ENCODE measurements at regions of chr7 and their contacts with region 1.

Region 1: DNA sequence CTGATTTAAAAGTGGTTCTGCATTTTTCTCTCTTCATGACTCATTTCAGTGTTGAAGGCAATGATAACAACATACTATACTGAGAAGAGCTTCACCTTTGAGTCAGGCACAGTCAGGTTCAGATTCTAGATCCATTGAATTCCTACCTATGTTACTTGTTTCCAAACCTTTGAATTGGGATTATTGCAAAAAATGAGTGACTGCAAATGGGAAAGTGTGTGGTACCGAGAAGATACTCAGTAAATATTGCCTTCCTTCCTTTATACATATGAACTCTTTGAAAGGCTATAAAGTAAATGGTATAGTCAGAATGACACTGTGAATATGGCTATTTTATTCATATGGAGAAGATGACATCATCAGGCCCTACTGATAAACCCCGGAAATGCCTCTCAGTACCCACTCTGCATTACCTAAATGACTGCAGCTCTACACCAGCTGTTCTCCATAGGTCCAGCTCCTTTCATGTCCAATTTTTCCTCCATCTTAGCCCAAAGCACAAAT is 66.7 kb upstream of the FGL2 start:
- DNase-seq: no peak
- H3K4me3 Mint-ChIP-seq: no peak overlapping the region
- H3K27ac Mint-ChIP-seq: peak overlapping the region; percentile 62
- H3K4me1 Mint-ChIP-seq: peaks cover 21% of the 10 kb centered on the region
- H3K27me3 Mint-ChIP-seq: no peaks in the 10 kb centered on the region

Region 2: GRCh38 chr7:77157446-77157845 is 108.9 kb before region 1 on chr7:
- intact Hi-C with region 1: no loop called
- DNase-seq: peak; percentile 2
- H3K4me3 Mint-ChIP-seq: peak overlapping the region; percentile 50
- H3K27ac Mint-ChIP-seq: peak overlapping the region; percentile 94
- H3K4me1 Mint-ChIP-seq: peaks cover 34% of the 10 kb centered on the region
- H3K27me3 Mint-ChIP-seq: no peaks in the 10 kb centered on the region

Region 3: GRCh38 chr7:77188731-77189437 is 77.5 kb before region 1 on chr7:
- intact Hi-C with region 1: loop called (anchors 2 kb)
- DNase-seq: no peak
- H3K4me3 Mint-ChIP-seq: no peak overlapping the region
- H3K27ac Mint-ChIP-seq: no peak overlapping the region
- H3K4me1 Mint-ChIP-seq: peaks cover 17% of the 10 kb centered on the region
- H3K27me3 Mint-ChIP-seq: peaks cover 2% of the 10 kb centered on the region

Region 4: DNA sequence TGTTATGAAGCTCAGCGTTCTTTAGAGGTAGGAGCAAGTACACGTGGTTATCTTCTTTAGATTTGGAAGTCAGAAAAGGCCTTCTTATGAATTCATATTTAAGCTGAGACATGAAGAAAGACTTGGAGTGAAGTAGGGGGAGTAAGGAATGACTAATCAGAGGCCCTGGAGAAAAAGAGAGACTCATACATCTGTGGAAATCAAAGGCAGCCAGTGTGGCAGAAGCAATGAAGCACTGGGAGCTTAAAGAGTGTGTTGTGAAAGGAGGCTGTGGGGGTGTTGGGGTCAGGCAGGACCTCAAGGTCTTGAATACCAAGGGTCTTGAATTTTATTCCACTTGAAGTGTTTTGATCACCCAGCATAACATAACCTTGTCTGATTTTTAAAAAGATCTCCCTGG is 31.1 kb before region 1 on chr7:
- intact Hi-C with region 1: no loop called
- DNase-seq: no peak
- H3K4me3 Mint-ChIP-seq: no peak overlapping the region
- H3K27ac Mint-ChIP-seq: no peak overlapping the region
- H3K4me1 Mint-ChIP-seq: peaks cover 16% of the 10 kb centered on the region
- H3K27me3 Mint-ChIP-seq: peaks cover 2% of the 10 kb centered on the region

Region 5: DNA sequence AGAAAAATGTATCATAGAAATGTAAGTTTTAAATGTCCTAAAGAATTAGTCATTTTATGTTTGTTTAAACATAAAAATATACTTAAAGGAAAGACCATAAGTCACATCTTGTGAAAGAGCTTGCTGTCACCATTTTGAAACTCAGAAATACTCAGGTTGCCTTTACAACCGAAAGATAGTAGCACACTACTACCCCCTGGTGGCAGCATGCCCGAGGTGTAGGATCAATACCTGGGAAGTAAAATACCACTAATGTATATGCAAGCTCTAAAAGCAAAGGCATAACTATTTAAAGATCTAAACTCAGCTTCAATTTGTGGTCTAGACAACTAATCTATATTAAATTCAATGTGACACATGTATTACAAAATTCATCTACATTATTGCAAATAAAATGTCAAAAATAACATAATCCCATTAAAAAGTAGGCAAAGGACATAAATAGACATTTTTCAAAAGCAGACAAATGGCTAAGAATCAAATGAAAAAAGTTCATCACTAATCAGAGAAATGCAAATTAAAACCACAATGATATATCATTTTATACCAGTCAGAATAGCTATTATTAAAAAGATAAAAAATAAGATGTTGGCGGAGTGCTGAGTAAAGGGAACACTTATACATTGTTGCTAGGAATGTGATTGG is 19.0 kb before region 1 on chr7:
- intact Hi-C with region 1: loop called (anchors 1 kb)
- DNase-seq: peak; percentile 79
- H3K4me3 Mint-ChIP-seq: no peak overlapping the region
- H3K27ac Mint-ChIP-seq: no peak overlapping the region
- H3K4me1 Mint-ChIP-seq: peaks cover 20% of the 10 kb centered on the region
- H3K27me3 Mint-ChIP-seq: peaks cover 19% of the 10 kb centered on the region

Region 6: GRCh38 chr7:77331938-77332695 is 65.8 kb after region 1 on chr7:
- intact Hi-C with region 1: loop called (anchors 1 kb)
- DNase-seq: peak; percentile 44
- H3K4me3 Mint-ChIP-seq: no peak overlapping the region
- H3K27ac Mint-ChIP-seq: no peak overlapping the region
- H3K4me1 Mint-ChIP-seq: peaks cover 48% of the 10 kb centered on the region
- H3K27me3 Mint-ChIP-seq: no peaks in the 10 kb centered on the region